ENCODE measurements at regions of chr13 and their contacts with region 1.

Region 1: GRCh38 chr13:82993417-82993816 is 888.9 kb downstream of the SLITRK1 start:
- DNase-seq: no peak
- ATAC-seq: no peak
- H3K4me3 ChIP-seq: no peak overlapping the region
- H3K27ac ChIP-seq: no peak overlapping the region
- H3K4me1 ChIP-seq: no peaks in the 10 kb centered on the region
- H3K27me3 ChIP-seq: no peaks in the 10 kb centered on the region
- CTCF ChIP-seq: no peak
- EP300 ChIP-seq: no peak
- POLR2A ChIP-seq: no peak
- RAD21 ChIP-seq: no peak

Region 2: GRCh38 chr13:82976499-82976898 is 16.9 kb before region 1 on chr13:
- CTCF ChIA-PET with region 1: interaction called, 3 read pairs
- POLR2A ChIA-PET with region 1: no interaction called
- RAD21 ChIA-PET with region 1: no interaction called
- SMC1A ChIA-PET with region 1: no interaction called
- in situ Hi-C with region 1: no loop called
- intact Hi-C with region 1: loop called (anchors 2 kb)
- DNase-seq: no peak
- ATAC-seq: no peak
- H3K4me3 ChIP-seq: no peak overlapping the region
- H3K27ac ChIP-seq: no peak overlapping the region
- H3K4me1 ChIP-seq: no peaks in the 10 kb centered on the region
- H3K27me3 ChIP-seq: no peaks in the 10 kb centered on the region
- CTCF ChIP-seq: no peak
- EP300 ChIP-seq: no peak
- POLR2A ChIP-seq: no peak
- RAD21 ChIP-seq: no peak

Region 3: GRCh38 chr13:83048419-83048818 is 55.0 kb after region 1 on chr13:
- CTCF ChIA-PET with region 1: no interaction called
- POLR2A ChIA-PET with region 1: no interaction called
- RAD21 ChIA-PET with region 1: no interaction called
- SMC1A ChIA-PET with region 1: no interaction called
- in situ Hi-C with region 1: no loop called
- intact Hi-C with region 1: no loop called
- DNase-seq: no peak
- ATAC-seq: no peak
- H3K4me3 ChIP-seq: no peak overlapping the region
- H3K27ac ChIP-seq: no peak overlapping the region
- H3K4me1 ChIP-seq: no peaks in the 10 kb centered on the region
- H3K27me3 ChIP-seq: no peaks in the 10 kb centered on the region
- CTCF ChIP-seq: no peak
- EP300 ChIP-seq: no peak
- POLR2A ChIP-seq: no peak
- RAD21 ChIP-seq: no peak

Region 4: DNA sequence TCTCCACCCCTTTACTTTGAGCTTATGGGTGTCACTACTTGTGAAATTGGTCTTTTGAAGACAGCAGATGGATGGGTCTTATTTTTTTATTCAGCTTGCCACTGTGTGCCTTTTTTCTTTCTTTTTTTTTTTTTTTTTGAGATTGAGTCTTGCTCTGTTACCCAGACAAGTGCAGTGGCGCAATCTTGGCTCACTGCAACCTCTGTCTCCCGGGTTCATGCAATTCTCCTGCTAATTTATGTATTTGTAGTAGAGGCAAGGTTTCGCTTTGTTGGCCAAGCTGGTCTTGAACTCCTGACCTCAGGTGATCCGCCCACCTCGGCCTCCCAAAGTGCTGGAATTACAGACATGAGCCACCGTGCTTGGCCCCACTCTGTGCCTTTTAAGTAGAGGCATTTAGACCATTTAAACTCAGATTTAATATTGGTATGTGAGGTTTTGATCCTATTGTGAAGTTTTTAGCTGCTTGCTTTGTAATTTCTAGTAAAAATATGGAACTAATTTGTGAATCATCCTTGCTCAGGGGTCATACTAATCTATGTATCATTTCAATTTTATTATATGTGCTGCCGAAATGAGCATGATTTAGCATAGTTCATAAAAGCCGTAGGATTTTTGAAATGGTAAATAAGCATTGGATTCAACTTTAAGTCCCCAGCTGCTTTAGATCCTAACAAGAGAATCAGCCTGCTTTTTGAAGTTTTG is 304.3 kb after region 1 on chr13:
- CTCF ChIA-PET with region 1: no interaction called
- POLR2A ChIA-PET with region 1: no interaction called
- RAD21 ChIA-PET with region 1: no interaction called
- SMC1A ChIA-PET with region 1: no interaction called
- in situ Hi-C with region 1: no loop called
- intact Hi-C with region 1: no loop called
- DNase-seq: no peak
- ATAC-seq: no peak
- H3K4me3 ChIP-seq: no peak overlapping the region
- H3K27ac ChIP-seq: no peak overlapping the region
- H3K4me1 ChIP-seq: no peaks in the 10 kb centered on the region
- H3K27me3 ChIP-seq: no peaks in the 10 kb centered on the region
- CTCF ChIP-seq: no peak
- EP300 ChIP-seq: no peak
- POLR2A ChIP-seq: no peak
- RAD21 ChIP-seq: no peak

Measured in GM12878 (cell line).